PC-3 (cell line): ENCODE measurements at regions of chr1 and their contacts with region 1.

Region 1: GRCh38 chr1:233654667-233655432 is 40.9 kb downstream of the KCNK1 start:
- DNase-seq: peak; percentile 95
- ATAC-seq: peak; percentile 52
- H3K4me3 ChIP-seq: peak overlapping the region; percentile 42; the same call in 1 of the 2 replicates
- H3K27ac ChIP-seq: peak overlapping the region; percentile 93
- H3K4me1 ChIP-seq: peaks cover 49% of the 10 kb centered on the region
- H3K27me3 ChIP-seq: no peaks in the 10 kb centered on the region
- CTCF ChIP-seq: no peak

Region 2: GRCh38 chr1:233582439-233582838 is 72.4 kb before region 1 on chr1:
- CTCF ChIA-PET with region 1: no interaction called
- POLR2A ChIA-PET with region 1: no interaction called
- intact Hi-C with region 1: no loop called
- DNase-seq: no peak
- ATAC-seq: no peak
- H3K4me3 ChIP-seq: no peak overlapping the region
- H3K27ac ChIP-seq: no peak overlapping the region
- H3K4me1 ChIP-seq: no peaks in the 10 kb centered on the region
- H3K27me3 ChIP-seq: no peaks in the 10 kb centered on the region
- CTCF ChIP-seq: no peak

Region 3: DNA sequence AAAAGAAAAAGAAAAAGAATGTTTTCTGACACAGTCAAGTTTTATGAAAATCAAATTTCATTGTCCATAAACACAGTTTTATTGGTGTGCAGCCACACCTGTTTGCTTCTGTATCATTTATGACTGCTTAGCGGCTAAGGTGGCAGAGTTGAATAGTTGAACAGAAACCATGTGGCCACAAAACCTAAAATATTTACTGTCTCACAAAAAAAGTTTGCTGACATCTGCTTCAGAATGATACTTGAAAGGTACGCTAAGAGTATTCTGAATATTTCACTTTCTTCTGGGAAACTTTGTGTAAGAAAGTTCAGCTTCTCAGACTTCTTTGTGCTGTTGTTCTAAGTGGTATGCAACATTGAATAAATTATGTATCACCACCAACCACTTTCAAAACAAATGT is 34.8 kb before region 1 on chr1:
- CTCF ChIA-PET with region 1: no interaction called
- POLR2A ChIA-PET with region 1: no interaction called
- intact Hi-C with region 1: loop called (anchors 2 kb)
- DNase-seq: peak; percentile 37
- ATAC-seq: peak; percentile 30
- H3K4me3 ChIP-seq: no peak overlapping the region
- H3K27ac ChIP-seq: no peak overlapping the region
- H3K4me1 ChIP-seq: peaks cover 17% of the 10 kb centered on the region
- H3K27me3 ChIP-seq: no peaks in the 10 kb centered on the region
- CTCF ChIP-seq: no peak